Posterior vena cava (tissue), 2 donors: ENCODE measurements at regions of chr21 and their contacts with region 1.

Region 1: GRCh38 chr21:40652436-40652835 is 194.5 kb downstream of the DSCAM start:
- DNase-seq: no peak

Region 2: GRCh38 chr21:40615505-40616376 is 36.7 kb before region 1 on chr21:
- intact Hi-C with region 1: loop called in 1 of 2 experiments (anchors 1 kb)
- DNase-seq: no peak

Region 3: DNA sequence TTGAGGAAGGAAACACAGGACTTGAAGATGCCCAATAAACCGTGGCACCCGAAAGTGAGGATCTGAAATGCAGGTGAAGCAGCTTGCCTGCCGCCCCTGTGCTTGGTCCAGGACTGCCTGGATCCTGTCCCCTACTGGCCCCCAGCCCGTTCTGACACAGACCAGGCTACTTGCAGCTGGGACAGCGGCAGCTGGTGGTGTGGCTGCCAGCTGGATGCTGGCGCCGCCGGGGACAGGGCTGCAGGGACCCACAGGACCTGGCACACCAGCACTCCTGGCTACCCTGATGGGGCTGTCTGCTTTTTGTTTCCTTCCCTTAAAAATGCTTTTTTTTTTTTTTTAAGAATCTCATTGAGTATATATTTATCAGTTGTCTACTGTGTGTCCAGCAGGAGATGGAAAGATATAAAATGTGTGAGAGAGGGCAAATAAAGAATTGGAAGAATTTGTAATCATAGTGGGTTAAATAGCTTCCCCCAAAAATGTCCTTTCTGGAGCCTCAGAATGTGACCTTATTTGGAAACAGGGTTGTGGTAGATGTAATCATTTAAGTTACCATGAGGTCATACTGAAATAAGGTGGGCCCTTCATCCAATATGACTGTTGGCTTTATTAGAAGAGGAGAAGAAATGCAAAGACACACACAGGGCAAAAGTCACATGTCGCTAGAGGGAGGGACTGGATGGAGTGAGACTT is 28.9 kb after region 1 on chr21:
- intact Hi-C with region 1: no loop called
- DNase-seq: no peak